Activated CD4-positive, alpha-beta memory T cell treated with anti-CD3 and anti-CD28 coated beads for 36 hours (primary cell): ENCODE measurements at regions of chr3 and their contacts with region 1.

Region 1: GRCh38 chr3:53114011-53114400 is 16.2 kb downstream of the RFT1 start:
- DNase-seq: peak; percentile 90
- H3K4me3 Mint-ChIP-seq: no peak overlapping the region
- H3K27ac Mint-ChIP-seq: no peak overlapping the region
- H3K4me1 Mint-ChIP-seq: peaks cover 17% of the 10 kb centered on the region
- H3K27me3 Mint-ChIP-seq: no peaks in the 10 kb centered on the region

Region 2: DNA sequence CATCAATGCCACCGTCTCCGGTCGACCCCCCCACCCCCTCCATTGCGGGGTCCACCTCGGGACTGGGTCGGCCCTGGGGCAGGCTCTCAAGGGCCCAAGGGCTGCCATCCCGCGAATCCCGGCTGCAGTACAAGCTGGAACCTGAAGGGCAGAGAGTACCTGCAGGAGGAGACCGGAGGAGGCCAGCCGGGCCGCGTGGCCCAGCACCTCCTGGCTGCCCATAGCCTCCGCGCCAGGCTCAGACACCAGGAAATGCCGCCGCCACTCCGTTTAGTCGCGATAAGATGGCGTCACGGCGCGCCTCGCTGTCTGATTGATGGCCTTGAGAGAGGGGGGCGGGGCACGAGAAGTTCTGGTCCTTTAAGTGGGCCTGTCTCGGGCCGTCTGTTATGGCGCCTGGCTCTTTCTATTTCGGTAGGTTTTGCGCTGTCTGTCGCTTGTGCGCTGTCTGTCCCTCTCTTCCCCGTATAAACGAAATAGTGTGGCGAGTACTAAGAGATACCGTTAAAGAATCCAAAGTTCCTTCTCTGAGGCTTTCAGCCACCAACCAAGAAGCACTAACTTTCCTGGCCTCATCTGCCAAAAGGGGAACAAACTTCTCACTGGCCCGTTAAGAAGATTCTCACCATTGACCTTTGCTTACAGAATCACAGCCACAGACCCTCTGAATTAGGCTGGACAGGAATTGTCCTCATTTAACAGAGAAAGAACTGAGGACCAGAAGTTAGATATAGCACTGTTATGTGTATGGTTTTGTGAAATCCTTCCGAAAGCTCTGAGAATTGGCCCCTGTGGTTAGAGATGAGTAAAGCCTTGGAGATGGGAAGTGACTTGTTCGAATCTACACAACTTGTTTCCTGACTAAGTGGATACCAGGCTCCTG is 16.4 kb after region 1 on chr3 and contains the start of gene RFT1:
- CTCF ChIA-PET with region 1: interaction called, 25 read pairs
- POLR2A ChIA-PET with region 1: interaction called, 3 read pairs
- intact Hi-C with region 1: loop called (anchors 1 kb)
- DNase-seq: peak; percentile 99
- H3K4me3 Mint-ChIP-seq: peak within 1 kb of the TSS; percentile 95
- H3K27ac Mint-ChIP-seq: peak within 1 kb of the TSS; percentile 97
- H3K4me1 Mint-ChIP-seq: peaks cover 21% of the 10 kb centered on the region
- H3K27me3 Mint-ChIP-seq: no peaks in the 10 kb centered on the region
- total RNA-seq, gene RFT1: 35.0 to 38.2 TPM

Region 3: DNA sequence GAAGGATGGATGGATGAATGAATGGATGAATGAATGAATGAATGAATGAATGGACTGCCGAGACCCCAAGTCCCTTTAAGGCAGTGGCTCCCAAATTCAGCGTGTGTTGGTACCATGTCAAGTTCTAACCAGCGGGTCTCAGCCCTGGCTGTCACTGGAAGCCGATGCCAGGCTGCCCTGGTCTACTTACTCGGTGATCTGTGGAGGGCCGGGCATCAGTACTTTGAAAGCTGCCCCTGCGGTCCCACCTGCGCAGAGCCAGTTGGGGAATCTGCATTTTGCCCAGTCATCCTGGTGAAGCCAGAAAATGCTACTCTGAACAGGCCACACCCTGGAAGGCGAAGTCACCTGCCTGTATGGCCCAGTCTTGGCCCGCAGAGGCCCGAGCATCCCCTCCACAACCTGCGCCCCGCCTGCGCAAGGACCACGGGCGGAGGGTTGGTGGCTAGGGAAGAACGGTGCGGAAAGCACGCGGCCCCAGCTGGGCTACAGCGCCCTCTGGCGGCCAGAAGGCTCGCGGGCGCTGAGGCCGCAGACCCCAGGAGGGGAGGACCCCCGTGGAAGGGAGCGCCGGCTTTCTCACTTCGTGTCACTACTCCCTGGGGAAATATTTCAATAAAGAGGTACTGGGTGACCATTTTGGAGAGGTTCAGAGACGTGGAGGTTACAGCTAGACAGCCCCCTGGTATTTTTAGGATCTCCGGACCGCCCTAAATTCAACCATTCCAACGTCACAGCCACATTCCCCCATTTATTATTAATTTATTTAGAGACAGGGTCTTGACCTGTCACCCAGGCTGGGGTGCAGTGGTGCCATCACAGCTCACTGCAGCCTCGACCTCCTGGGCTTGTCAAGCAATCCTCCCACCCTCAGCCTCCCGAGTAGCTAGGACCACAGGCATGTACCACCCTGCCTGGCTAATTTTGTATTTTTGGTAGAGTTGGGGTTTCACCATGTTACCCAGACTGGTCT is 81.9 kb after region 1 on chr3:
- CTCF ChIA-PET with region 1: interaction called, 124 read pairs
- POLR2A ChIA-PET with region 1: interaction called, 6 read pairs
- intact Hi-C with region 1: loop called (anchors 1 kb)
- DNase-seq: peak; percentile 66
- H3K4me3 Mint-ChIP-seq: no peak overlapping the region
- H3K27ac Mint-ChIP-seq: no peak overlapping the region
- H3K4me1 Mint-ChIP-seq: peaks cover 7% of the 10 kb centered on the region
- H3K27me3 Mint-ChIP-seq: no peaks in the 10 kb centered on the region

Region 4: GRCh38 chr3:53347261-53348064 is 233.5 kb after region 1 on chr3 and contains the start of gene DCP1A:
- CTCF ChIA-PET with region 1: no interaction called
- POLR2A ChIA-PET with region 1: no interaction called
- intact Hi-C with region 1: loop called (anchors 10 kb)
- DNase-seq: peak; percentile 97
- H3K4me3 Mint-ChIP-seq: peak within 1 kb of the TSS; percentile 97
- H3K27ac Mint-ChIP-seq: peak within 1 kb of the TSS; percentile 90
- H3K4me1 Mint-ChIP-seq: peaks cover 20% of the 10 kb centered on the region
- H3K27me3 Mint-ChIP-seq: no peaks in the 10 kb centered on the region
- total RNA-seq, gene DCP1A: 32.0 to 32.7 TPM

Region 5: GRCh38 chr3:54506603-54507002 is 1392.6 kb after region 1 on chr3:
- CTCF ChIA-PET with region 1: no interaction called
- POLR2A ChIA-PET with region 1: no interaction called
- intact Hi-C with region 1: no loop called
- DNase-seq: no peak
- H3K4me3 Mint-ChIP-seq: no peak overlapping the region
- H3K27ac Mint-ChIP-seq: no peak overlapping the region
- H3K4me1 Mint-ChIP-seq: no peaks in the 10 kb centered on the region
- H3K27me3 Mint-ChIP-seq: no peaks in the 10 kb centered on the region